Mammary epithelial cell (primary cell): ENCODE measurements at regions of chr3 and their contacts with region 1.

Region 1: GRCh38 chr3:32216172-32216783 is 22.2 kb upstream of the CMTM8 start:
- DNase-seq: no peak
- H3K4me3 ChIP-seq: no peak overlapping the region
- H3K27ac ChIP-seq: no peak overlapping the region
- H3K4me1 ChIP-seq: no peaks in the 10 kb centered on the region
- H3K27me3 ChIP-seq: no peaks in the 10 kb centered on the region
- CTCF ChIP-seq: no peak

Region 2: GRCh38 chr3:32276279-32276847 is 60.1 kb after region 1 on chr3:
- CTCF ChIA-PET with region 1: no interaction called
- dilution Hi-C with region 1: loop called (anchors 5 kb)
- in situ Hi-C with region 1: no loop called
- intact Hi-C with region 1: loop called (anchors 5 kb)
- DNase-seq: peak; percentile 38
- H3K4me3 ChIP-seq: no peak overlapping the region
- H3K27ac ChIP-seq: no peak overlapping the region
- H3K4me1 ChIP-seq: no peaks in the 10 kb centered on the region
- H3K27me3 ChIP-seq: no peaks in the 10 kb centered on the region
- CTCF ChIP-seq: no peak

Region 3: DNA sequence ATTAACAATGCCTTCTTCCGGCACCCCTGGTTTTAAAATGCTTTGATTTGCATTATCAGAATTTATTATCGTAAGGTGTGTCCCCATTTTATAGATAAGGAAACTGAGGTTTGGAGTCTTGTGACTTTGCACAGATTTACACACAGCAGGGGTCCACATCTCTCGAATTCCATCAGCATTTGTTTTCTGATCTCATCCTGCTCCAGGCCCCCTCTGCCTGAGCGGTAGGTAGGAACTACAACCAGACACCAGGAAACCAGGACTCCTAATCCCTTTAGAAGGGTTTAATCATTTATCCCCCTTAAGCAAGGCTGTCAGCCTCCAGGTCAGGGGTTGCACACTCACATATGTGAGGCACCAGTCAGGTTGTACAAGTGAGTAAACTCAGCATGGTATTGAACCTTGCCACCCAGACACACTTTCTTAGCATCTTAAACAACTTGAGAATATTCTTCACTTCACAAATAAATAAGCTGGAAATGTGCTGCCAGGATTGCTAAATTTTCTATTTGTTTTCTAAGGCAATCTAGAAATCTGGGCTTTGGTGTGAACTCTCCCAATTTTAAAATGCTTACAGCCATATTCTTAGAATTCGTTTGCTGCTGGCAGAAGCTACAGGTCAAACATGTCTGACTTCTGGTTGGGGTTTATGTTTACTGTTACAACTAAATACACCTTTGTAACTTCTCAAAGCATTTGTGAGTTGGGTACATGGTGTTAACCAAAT is 143.7 kb after region 1 on chr3:
- CTCF ChIA-PET with region 1: no interaction called
- dilution Hi-C with region 1: no loop called
- in situ Hi-C with region 1: no loop called
- intact Hi-C with region 1: no loop called
- DNase-seq: no peak
- H3K4me3 ChIP-seq: no peak overlapping the region
- H3K27ac ChIP-seq: no peak overlapping the region
- H3K4me1 ChIP-seq: peaks cover 7% of the 10 kb centered on the region
- H3K27me3 ChIP-seq: no peaks in the 10 kb centered on the region
- CTCF ChIP-seq: no peak